A549 (cell line): ENCODE measurements at regions of chr2 and their contacts with region 1.

Region 1: DNA sequence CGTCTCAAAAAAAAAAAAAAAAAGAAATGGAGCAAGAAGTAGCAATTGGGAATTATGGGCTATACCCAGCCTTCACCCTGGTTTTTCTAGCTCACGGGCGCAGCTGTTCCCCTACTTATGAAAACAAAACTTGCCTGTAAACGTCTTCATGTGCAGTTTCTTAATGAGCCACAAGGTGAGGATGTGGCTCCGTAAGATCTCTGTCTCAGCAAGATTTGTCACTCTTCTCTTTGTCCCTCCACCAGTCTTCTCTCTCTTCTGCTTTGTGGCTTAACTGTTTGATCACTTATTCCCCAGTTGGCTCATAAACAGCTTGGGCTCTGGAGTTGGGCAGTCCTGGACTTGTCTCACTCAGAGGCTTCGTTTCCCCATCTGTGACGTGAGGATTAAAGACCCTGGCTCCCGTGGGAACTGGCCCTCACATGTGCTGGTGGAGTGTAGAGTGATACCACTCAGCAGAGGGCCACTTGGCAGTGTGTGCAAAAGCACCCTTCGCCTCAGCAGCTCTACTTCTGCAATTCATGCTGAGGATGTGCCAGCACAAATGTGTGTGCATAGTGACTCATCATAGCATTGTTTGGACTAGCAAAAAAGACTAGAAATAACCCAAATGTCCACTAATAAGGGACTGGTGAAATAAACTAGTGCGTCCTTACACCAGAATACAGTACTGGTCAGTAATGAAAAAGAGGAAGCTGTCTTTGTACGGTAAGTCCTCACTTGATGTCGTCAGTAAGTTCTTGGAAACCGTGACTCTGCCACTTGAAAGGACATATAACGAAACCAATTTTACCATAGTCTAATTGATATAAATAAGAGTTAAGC is 8.7 kb downstream of the CEP68 start:
- DNase-seq: peak; percentile 52 to 85
- ATAC-seq: peak; percentile 82 to 89
- H3K4me3 ChIP-seq: no peak overlapping the region
- H3K27ac ChIP-seq: peak overlapping the region; percentile 55 to 77
- H3K4me1 ChIP-seq: peaks cover 37% of the 10 kb centered on the region
- CTCF ChIP-seq: peak; percentile 79
- EP300 ChIP-seq: no peak
- POLR2A ChIP-seq: no peak
- RAD21 ChIP-seq: peak; percentile 82 to 89

Region 2: GRCh38 chr2:65045651-65046050 is 19.3 kb before region 1 on chr2:
- CTCF ChIA-PET with region 1: interaction called, 17 read pairs
- POLR2A ChIA-PET with region 1: no interaction called
- DNase-seq: no peak
- ATAC-seq: no peak
- H3K4me3 ChIP-seq: no peak overlapping the region
- H3K27ac ChIP-seq: no peak overlapping the region
- H3K4me1 ChIP-seq: no peaks in the 10 kb centered on the region
- CTCF ChIP-seq: no peak
- EP300 ChIP-seq: no peak
- POLR2A ChIP-seq: no peak
- RAD21 ChIP-seq: no peak

Region 3: GRCh38 chr2:65107530-65107929 is 42.6 kb after region 1 on chr2:
- CTCF ChIA-PET with region 1: interaction called, 11 read pairs
- POLR2A ChIA-PET with region 1: no interaction called
- DNase-seq: no peak
- ATAC-seq: no peak
- H3K4me3 ChIP-seq: no peak overlapping the region
- H3K27ac ChIP-seq: no peak overlapping the region
- H3K4me1 ChIP-seq: no peaks in the 10 kb centered on the region
- CTCF ChIP-seq: no peak
- EP300 ChIP-seq: no peak
- POLR2A ChIP-seq: no peak
- RAD21 ChIP-seq: no peak

Region 4: GRCh38 chr2:65169760-65170136 is 104.8 kb after region 1 on chr2:
- CTCF ChIA-PET with region 1: interaction called, 10 read pairs
- POLR2A ChIA-PET with region 1: no interaction called
- DNase-seq: no peak
- ATAC-seq: no peak
- H3K4me3 ChIP-seq: no peak overlapping the region
- H3K27ac ChIP-seq: no peak overlapping the region; a peak in 2 of 6 replicates
- H3K4me1 ChIP-seq: peaks cover 15% of the 10 kb centered on the region; the same call in 2 of the 3 replicates
- CTCF ChIP-seq: no peak
- EP300 ChIP-seq: no peak
- POLR2A ChIP-seq: no peak
- RAD21 ChIP-seq: no peak

Region 5: DNA sequence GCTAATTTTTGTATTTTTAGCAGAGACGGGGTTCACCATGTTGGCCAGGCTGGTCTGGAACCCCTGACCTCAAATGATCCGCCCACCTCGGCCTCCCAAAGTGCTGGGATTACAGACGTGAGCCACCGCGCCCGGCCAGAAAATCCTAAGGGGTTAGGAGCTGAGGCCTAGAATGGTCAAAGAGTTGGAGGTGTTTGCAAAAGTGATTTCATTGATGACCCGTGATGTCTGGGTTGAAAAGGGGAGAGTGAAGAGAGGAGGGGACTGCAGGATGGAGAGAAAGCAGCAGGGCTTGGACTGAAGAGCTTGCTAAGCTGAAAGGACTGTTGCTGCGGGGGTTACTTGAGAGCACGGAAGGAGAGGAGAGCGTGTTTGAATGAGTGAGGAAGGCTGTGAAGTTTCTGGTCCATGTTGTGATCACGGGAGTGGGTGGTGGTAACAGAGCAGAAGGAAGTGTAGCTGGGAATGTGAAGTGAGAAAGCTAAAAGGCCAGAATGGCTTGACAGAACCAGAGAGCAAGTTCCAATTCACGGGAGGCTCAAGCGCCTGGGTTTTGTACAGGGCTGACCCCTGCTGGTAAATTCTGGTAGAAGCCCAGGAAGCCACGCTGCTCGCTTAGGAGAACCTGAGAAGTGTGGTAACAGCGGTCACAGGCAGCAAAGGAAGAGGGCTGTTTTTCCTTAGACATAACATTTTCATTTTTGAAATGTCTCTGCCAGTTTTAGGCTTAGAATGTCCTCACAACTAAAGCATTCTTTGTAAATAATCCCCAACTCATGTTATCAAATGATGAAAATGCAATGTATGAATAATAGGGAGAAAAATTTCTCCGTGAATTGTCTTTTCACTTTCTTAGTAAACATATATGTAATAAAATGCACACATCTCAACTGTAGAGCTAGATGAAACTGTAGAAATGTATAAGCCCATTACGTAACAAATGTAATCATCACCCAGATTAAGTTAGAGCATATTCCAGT is 122.2 kb after region 1 on chr2:
- CTCF ChIA-PET with region 1: interaction called, 69 read pairs
- POLR2A ChIA-PET with region 1: no interaction called
- DNase-seq: peak; percentile 83 to 88
- ATAC-seq: peak; percentile 98 to 99
- H3K4me3 ChIP-seq: no peak overlapping the region
- H3K27ac ChIP-seq: no peak overlapping the region
- H3K4me1 ChIP-seq: 0 out of 3 replicates have a peak, but pooled peaks cover 4% of the 10 kb centered on the region
- CTCF ChIP-seq: peak; percentile 90
- EP300 ChIP-seq: no peak
- POLR2A ChIP-seq: no peak
- RAD21 ChIP-seq: peak; percentile 86 to 91

Region 6: GRCh38 chr2:65576861-65577601 is 512.1 kb after region 1 on chr2:
- CTCF ChIA-PET with region 1: interaction called, 11 read pairs
- POLR2A ChIA-PET with region 1: no interaction called
- DNase-seq: peak; percentile 82 to 91
- ATAC-seq: peak; percentile 92 to 95
- H3K4me3 ChIP-seq: peak overlapping the region; percentile 21; the same call in 2 of the 3 replicates
- H3K27ac ChIP-seq: peak overlapping the region; percentile 79 to 88
- H3K4me1 ChIP-seq: peaks cover 28% of the 10 kb centered on the region
- CTCF ChIP-seq: no peak
- EP300 ChIP-seq: 0 out of 5 replicates have a peak, but pooled peaks of 1 of the 2 experiments have one; percentile 27
- POLR2A ChIP-seq: no peak
- RAD21 ChIP-seq: no peak